ENCODE measurements at regions of chr7 and their contacts with region 1.

Region 1: GRCh38 chr7:25989140-25989705 is 162.8 kb upstream of the NFE2L3 start:
- DNase-seq: no peak
- H3K4me3 ChIP-seq: no peak overlapping the region
- H3K27ac ChIP-seq: no peak overlapping the region
- H3K4me1 ChIP-seq: no peaks in the 10 kb centered on the region
- CTCF ChIP-seq: no peak

Region 2: GRCh38 chr7:25549271-25549921 is 439.8 kb before region 1 on chr7:
- CTCF ChIA-PET with region 1: no interaction called
- POLR2A ChIA-PET with region 1: no interaction called
- intact Hi-C with region 1: no loop called
- DNase-seq: no peak
- H3K4me3 ChIP-seq: no peak overlapping the region
- H3K27ac ChIP-seq: no peak overlapping the region
- H3K4me1 ChIP-seq: no peaks in the 10 kb centered on the region
- CTCF ChIP-seq: no peak

Region 3: DNA sequence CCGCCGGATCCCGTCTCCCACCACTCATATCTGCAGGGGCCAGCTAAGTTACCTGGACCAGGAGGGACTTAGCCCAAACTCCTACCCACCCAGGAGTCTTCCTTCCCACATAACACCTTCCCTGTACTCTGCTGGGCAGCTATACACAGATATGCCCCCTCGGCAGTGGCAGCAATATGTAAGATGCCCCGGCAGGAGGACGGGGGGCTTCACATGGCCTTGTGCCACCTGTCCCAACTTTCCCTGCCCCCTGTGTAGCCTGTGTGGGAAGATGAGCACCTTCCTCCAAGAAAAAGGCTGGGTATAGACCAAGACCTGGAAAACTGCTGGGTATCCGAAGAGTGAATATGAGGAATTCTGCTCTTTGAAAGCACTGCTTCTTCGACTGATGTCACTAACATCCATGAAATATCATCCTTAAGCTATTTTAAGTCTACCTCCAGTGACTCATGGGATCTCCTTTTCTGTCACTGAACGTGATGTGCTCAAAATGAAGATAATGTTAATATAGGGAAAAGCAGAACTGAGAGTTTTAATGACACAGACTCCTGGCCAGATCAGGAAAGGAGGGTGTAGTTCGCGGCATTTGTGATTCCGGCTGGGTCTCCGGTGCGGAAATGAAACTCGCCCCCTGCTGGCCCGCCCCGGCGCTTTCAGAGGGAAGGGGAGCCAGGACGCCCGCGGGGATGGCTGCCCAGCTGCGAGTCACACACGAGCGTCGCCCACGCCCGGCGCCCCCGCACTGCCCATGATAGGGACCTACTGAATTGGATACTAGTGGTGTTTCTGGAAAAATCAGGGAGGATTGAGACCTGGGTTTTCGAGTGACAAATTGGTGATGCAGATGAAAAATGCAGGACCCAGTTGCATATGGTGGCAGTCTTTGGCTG is 94.1 kb before region 1 on chr7:
- CTCF ChIA-PET with region 1: no interaction called
- POLR2A ChIA-PET with region 1: no interaction called
- intact Hi-C with region 1: no loop called
- DNase-seq: peak; percentile 70
- H3K4me3 ChIP-seq: peak overlapping the region; percentile 15
- H3K27ac ChIP-seq: peak overlapping the region; percentile 19
- H3K4me1 ChIP-seq: peaks cover 35% of the 10 kb centered on the region
- CTCF ChIP-seq: peak; percentile 81

Region 4: DNA sequence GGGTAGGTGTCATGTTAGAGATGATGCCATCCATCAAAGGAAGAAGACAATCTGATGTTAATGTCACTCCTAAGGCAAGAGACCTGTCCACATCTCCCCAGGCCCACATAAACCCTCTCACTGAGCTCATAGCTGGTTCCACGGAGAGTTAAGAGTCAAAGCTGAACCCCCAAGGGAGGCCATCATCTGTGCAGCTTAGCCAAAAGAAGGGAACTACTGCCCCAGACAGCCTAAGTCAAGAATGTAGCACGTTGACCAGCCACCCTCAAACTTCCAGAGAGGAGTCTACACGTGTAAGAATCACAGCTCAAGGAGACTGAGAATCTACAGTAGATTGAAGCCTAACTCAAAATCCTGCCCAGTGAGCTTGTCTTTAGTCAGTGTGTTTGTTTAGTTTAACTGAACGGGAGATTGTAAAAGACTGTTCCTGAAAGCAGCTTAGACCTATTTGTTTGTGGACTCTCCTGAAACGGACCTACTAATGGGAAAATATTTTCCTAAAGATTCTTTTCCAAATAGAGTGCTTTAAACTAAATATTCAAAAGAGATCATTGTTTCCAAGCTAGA is 30.0 kb before region 1 on chr7:
- CTCF ChIA-PET with region 1: no interaction called
- POLR2A ChIA-PET with region 1: no interaction called
- intact Hi-C with region 1: no loop called
- DNase-seq: peak; percentile 36
- H3K4me3 ChIP-seq: peak overlapping the region; percentile 11
- H3K27ac ChIP-seq: no peak overlapping the region
- H3K4me1 ChIP-seq: peaks cover 37% of the 10 kb centered on the region
- CTCF ChIP-seq: no peak

Region 5: GRCh38 chr7:26105236-26105635 is 116.0 kb after region 1 on chr7:
- CTCF ChIA-PET with region 1: no interaction called
- POLR2A ChIA-PET with region 1: interaction called, 10 read pairs
- intact Hi-C with region 1: no loop called
- DNase-seq: no peak
- H3K4me3 ChIP-seq: no peak overlapping the region
- H3K27ac ChIP-seq: no peak overlapping the region
- H3K4me1 ChIP-seq: peaks cover 34% of the 10 kb centered on the region
- CTCF ChIP-seq: no peak

Region 6: DNA sequence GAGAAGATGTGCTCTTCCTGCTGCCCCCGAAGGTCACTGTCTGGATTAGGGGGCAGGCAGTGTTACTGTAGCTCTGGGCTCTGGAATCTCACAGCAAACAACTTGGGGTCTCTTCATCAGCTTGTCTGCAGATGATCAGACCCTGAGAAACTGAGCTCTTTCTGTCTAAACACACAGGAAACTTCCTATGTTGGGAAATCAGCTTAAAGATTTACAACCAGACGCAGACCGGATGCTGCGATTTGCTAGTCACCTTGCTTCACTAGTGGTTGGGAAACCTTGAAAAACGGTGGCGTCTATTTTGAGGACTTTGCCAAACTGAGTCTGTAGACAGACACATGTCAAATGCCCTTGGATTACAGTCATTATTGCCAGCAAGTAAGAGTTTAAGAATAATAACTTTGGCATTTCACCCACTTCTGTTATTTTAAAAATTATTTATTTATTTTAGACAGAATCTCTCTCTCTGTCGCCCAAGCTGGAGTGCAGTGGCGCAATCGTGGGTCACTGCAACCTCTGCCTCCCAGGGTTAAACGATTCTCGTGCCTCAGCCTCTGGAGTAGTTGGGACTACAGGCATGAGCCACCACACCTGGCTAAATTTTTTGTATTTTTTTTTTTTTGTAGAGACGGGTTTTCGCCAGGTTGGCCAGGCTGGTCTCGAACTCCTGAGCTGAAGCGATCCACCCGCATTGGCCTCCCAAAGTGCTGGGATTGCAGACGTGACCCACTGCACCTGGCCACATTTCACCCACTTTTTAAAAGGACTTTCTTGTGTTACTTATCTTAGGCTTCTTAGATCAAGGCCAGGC is 316.4 kb after region 1 on chr7:
- CTCF ChIA-PET with region 1: no interaction called
- POLR2A ChIA-PET with region 1: no interaction called
- intact Hi-C with region 1: no loop called
- DNase-seq: peak; percentile 53
- H3K4me3 ChIP-seq: peak overlapping the region; percentile 4
- H3K27ac ChIP-seq: peak overlapping the region; percentile 33
- H3K4me1 ChIP-seq: peaks cover 18% of the 10 kb centered on the region
- CTCF ChIP-seq: no peak